ACHN (cell line): ENCODE measurements at regions of chr12 and their contacts with region 1.

Region 1: GRCh38 chr12:108664338-108665258 is 30.9 kb upstream of the SELPLG start:
- DNase-seq: peak; percentile 95

Region 2: DNA sequence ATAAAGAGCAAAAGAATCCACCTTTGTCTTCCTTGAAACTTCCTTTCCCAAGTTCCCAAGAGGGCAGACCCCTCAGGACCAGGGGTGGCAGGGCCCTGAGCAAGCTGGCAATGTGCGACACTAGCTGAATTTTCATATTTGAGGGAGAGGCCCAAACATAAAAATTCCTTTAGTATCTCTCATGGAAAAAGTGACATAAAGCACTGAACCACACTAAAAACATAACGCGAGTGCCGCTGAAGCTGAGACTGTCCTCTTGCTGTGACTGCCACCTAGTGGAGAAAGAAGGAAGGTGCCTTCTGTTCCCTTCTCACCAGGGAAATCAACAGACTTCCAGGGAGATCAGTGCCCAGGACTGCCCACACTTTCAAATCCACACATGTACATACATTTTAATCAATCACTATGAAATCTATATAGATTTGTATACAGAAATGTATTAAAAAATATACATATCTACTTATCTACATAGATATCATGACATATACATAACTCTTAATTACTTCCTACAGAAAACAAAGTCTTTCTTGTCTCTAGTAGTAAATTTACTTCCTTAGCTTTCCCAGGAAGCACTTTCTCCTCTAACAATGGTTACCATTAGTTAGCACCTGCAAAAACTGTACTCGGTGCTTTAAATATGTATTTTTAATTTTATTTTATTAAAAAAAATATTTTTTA is 139.0 kb after region 1 on chr12:
- in situ Hi-C with region 1: loop called (anchors 25 kb)
- DNase-seq: peak; percentile 93